Endothelial cell of umbilical vein (primary cell): ENCODE measurements at regions of chr18 and their contacts with region 1.

Region 1: GRCh38 chr18:37385846-37386778 is 179.5 kb downstream of the CELF4 start:
- DNase-seq: peak; percentile 44
- H3K4me3 ChIP-seq: no peak overlapping the region
- H3K27ac ChIP-seq: no peak overlapping the region
- H3K4me1 ChIP-seq: no peaks in the 10 kb centered on the region
- H3K27me3 ChIP-seq: no peaks in the 10 kb centered on the region
- CTCF ChIP-seq: peak; percentile 23 to 52
- POLR2A ChIP-seq: no peak

Region 2: DNA sequence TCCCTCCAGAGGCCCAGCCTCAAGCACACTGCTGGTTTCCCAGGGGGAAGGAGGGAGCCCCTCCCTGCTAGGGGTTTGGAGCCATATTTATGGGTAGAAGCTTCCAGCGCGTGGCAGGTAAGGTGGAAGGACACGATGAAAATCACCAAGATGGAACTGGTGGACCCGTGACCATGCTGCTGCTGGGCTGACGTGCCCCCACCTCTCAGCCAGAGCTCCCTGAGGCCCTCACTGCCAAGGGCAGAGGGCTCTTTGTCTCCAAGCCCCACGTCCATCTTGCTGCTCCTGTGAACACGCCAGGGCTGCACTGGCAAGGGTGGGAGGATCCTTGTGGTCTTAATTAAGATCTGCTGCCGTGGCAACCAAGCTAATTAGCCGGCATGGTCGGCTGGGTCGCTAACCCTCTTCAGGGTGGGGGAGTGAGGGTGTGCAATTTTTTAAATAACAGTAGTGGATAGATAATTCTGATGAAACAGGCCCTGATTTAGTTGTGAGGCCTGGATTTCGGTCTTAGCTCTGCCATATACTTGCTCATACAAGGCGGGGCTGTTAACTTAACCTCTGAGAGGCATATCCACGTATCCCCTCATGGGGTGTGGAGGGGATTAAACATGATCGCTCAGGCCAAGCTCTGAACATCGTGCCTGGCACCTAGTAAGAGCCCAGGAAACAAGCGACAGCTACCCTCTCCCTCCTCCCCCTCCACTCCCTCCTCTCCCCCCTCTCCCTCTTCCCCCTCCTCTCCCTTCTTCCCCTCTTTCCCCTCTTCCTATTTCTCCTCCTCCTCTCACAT is 53.3 kb before region 1 on chr18:
- CTCF ChIA-PET with region 1: no interaction called
- POLR2A ChIA-PET with region 1: no interaction called
- dilution Hi-C with region 1: no loop called
- intact Hi-C with region 1: no loop called
- DNase-seq: no peak
- H3K4me3 ChIP-seq: no peak overlapping the region
- H3K27ac ChIP-seq: no peak overlapping the region
- H3K4me1 ChIP-seq: no peaks in the 10 kb centered on the region
- H3K27me3 ChIP-seq: no peaks in the 10 kb centered on the region
- CTCF ChIP-seq: no peak
- POLR2A ChIP-seq: no peak

Region 3: DNA sequence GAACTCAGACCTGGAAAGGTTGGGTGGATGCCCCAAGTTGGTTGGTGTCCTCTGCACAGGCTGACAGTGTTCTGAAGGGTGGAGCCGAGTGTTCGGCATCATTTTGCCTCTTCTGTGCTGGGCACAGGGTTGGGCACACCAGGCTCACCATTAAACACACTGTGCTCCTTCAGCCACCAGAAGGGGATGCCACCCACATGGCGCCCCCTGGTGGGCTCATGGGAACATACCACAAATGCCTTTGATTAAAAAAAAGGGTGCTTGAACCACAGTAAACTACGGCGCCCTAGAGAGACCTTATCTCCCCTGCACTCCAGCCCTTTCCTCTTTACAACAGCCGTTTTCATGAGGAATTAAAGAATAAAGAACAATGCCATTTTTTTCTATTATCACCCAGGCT is 90.1 kb after region 1 on chr18:
- CTCF ChIA-PET with region 1: interaction called, 10 read pairs
- POLR2A ChIA-PET with region 1: no interaction called
- dilution Hi-C with region 1: no loop called
- intact Hi-C with region 1: loop called (anchors 1 kb)
- DNase-seq: peak; percentile 10
- H3K4me3 ChIP-seq: no peak overlapping the region
- H3K27ac ChIP-seq: no peak overlapping the region
- H3K4me1 ChIP-seq: no peaks in the 10 kb centered on the region
- H3K27me3 ChIP-seq: no peaks in the 10 kb centered on the region
- CTCF ChIP-seq: peak; percentile 56 to 61
- POLR2A ChIP-seq: no peak